ENCODE measurements at regions of chr17 and their contacts with region 1.

Region 1: GRCh38 chr17:28951991-28952975 is 965 bp upstream of the PHF12 start:
- DNase-seq: peak; percentile 98
- H3K4me3 Mint-ChIP-seq: no peak overlapping the region
- H3K27ac Mint-ChIP-seq: no peak overlapping the region
- H3K4me1 Mint-ChIP-seq: peaks cover 21% of the 10 kb centered on the region
- H3K27me3 Mint-ChIP-seq: peaks cover 2% of the 10 kb centered on the region

Region 2: DNA sequence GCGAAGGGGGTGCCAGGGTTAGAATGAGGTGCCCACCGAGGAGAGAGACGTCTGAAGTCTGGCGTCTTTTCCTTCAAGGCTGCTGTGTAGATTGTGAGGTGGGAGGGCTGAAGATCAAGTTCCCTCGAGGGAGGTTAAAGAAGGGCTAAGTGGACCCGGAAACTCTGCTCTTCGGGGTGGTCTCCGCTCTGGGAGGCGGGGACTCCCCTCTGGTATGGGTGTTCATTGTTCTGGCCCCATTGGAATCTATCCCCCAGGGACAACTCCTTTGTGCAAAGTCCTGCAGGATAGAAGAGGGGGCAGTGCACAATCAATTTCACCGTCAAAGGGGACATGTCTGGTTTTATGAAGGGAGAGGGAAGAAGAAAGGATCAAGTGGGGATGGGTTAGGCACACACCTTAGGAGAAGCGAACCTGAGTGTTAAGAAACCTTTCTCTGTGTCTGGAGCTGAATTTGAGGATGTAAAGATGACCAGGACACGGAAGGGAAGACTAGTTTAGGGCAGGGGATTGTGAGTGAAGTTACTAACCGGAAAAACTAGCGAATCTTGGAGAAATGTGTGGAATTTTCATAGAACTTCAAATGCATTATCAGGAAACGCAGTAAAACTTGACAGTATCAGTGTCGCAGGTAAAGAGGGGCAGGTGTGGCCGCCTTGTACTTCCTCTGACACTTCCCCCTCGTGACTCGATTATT is 233.8 kb before region 1 on chr17:
- intact Hi-C with region 1: loop called (anchors 1 kb)
- DNase-seq: no peak
- H3K4me3 Mint-ChIP-seq: peak overlapping the region; percentile 82
- H3K27ac Mint-ChIP-seq: peak overlapping the region; percentile 86
- H3K4me1 Mint-ChIP-seq: peaks cover 39% of the 10 kb centered on the region
- H3K27me3 Mint-ChIP-seq: peaks cover 28% of the 10 kb centered on the region

Region 3: GRCh38 chr17:28763804-28764266 is 188.4 kb before region 1 on chr17:
- intact Hi-C with region 1: loop called (anchors 5 kb)
- DNase-seq: peak; percentile 93
- H3K4me3 Mint-ChIP-seq: no peak overlapping the region
- H3K27ac Mint-ChIP-seq: no peak overlapping the region
- H3K4me1 Mint-ChIP-seq: peaks cover 15% of the 10 kb centered on the region
- H3K27me3 Mint-ChIP-seq: no peaks in the 10 kb centered on the region

Region 4: GRCh38 chr17:28812091-28812747 is 140.1 kb before region 1 on chr17:
- intact Hi-C with region 1: loop called (anchors 2 kb)
- DNase-seq: peak; percentile 99
- H3K4me3 Mint-ChIP-seq: peak overlapping the region; percentile 85
- H3K27ac Mint-ChIP-seq: peak overlapping the region; percentile 97
- H3K4me1 Mint-ChIP-seq: peaks cover 36% of the 10 kb centered on the region
- H3K27me3 Mint-ChIP-seq: no peaks in the 10 kb centered on the region

Region 5: GRCh38 chr17:28902819-28903545 is 49.3 kb before region 1 on chr17 and contains the start of gene DHRS13:
- intact Hi-C with region 1: loop called (anchors 1 kb)
- DNase-seq: peak; percentile 99
- H3K4me3 Mint-ChIP-seq: peak within 1 kb of the TSS; percentile 90
- H3K27ac Mint-ChIP-seq: peak within 1 kb of the TSS; percentile 86
- H3K4me1 Mint-ChIP-seq: peaks cover 39% of the 10 kb centered on the region
- H3K27me3 Mint-ChIP-seq: no peaks in the 10 kb centered on the region
- total RNA-seq, gene DHRS13: 32.4 and 34.3 TPM in 2 replicates

Region 6: DNA sequence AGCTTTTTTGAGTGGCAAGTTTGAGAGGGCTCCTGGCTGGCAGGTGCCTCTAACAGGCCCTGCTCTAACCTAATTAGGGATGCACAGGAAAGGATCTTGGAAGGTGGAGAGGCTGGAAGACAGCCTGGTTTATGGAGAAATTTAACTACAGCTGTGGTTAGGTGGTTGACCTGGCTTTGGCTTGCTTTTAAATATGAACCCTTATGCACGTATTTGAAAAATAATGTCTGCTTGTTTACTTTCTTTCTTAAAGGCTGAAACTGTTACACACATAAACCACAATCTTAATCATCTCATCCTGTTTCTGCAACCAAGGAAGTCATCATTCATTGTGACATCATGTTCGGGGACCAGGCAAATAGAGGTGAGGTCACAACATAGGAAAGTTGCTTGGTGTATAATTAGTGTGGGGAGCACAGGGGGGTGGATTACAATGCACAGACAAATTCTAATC is 26.3 kb before region 1 on chr17:
- intact Hi-C with region 1: loop called (anchors 1 kb)
- DNase-seq: peak; percentile 89
- H3K4me3 Mint-ChIP-seq: peak overlapping the region; percentile 54
- H3K27ac Mint-ChIP-seq: peak overlapping the region; percentile 93
- H3K4me1 Mint-ChIP-seq: peaks cover 52% of the 10 kb centered on the region
- H3K27me3 Mint-ChIP-seq: no peaks in the 10 kb centered on the region

Region 7: GRCh38 chr17:29293890-29294579 is 341.8 kb after region 1 on chr17 and contains the start of gene NUFIP2:
- intact Hi-C with region 1: loop called (anchors 1 kb)
- DNase-seq: peak; percentile 99
- H3K4me3 Mint-ChIP-seq: peak within 1 kb of the TSS; percentile 99
- H3K27ac Mint-ChIP-seq: peak within 1 kb of the TSS; percentile 99
- H3K4me1 Mint-ChIP-seq: peaks cover 28% of the 10 kb centered on the region
- H3K27me3 Mint-ChIP-seq: no peaks in the 10 kb centered on the region
- total RNA-seq, gene NUFIP2: 83.2 and 89.7 TPM in 2 replicates